ENCODE measurements at regions of chr20 and their contacts with region 1.

Region 1: DNA sequence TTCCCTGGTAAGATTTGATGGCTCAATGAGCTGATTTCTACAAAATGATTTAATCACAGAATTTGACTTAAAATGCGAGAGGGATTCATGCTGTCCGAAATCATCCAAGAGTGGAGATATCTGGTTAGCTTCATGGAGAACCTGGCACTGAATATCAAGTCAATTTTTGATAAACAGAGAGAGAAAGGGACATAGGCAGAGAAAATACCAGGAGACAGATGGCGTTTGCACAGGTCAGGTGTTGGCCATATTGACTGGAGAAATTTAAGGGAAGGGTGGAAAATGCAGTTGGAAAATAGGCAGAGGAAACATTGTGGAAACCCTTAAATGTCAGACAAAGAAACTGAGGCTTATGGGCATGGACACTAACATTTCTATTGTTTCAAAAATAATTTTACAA is 47.0 kb downstream of the BCAS1 start:
- DNase-seq: no peak
- H3K4me3 ChIP-seq: no peak overlapping the region
- H3K27ac ChIP-seq: no peak overlapping the region
- H3K4me1 ChIP-seq: no peaks in the 10 kb centered on the region
- H3K27me3 ChIP-seq: no peaks in the 10 kb centered on the region
- CTCF ChIP-seq: no peak

Region 2: DNA sequence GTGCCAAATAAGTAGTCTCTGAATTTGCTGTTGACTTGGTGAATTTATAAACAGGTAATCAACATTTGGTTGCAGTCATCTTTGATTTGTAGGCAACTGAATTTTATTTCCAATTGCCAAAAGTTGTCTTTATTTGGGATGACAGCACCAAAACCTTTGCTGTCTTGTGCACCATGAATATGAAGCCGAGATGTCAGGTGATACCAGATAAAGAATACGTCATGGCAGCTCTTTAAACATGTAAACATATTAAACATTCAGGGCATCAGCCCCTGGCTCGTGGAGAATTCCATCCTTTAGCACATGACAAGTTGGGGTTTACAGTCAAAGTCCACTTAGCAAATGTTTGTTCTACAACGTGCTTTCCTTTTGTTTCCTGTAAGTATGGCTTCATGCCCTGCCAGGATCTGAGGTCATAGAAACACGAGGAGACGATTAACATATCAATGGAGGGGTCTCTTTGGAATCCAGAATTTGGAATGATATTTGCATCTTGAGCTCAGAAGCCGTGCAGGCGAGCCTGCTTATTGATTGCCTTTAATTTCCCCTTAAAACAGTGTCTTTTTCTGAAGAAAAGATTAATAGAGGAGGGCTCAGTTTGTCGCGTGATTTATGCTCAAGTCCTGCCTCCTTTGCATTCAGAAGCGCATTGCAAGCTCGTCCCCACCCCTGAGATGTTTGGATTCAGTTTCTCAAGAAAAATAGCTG is 259.5 kb before region 1 on chr20:
- CTCF ChIA-PET with region 1: no interaction called
- POLR2A ChIA-PET with region 1: no interaction called
- intact Hi-C with region 1: no loop called
- DNase-seq: peak in 1 of 2 experiments; percentile 29
- H3K4me3 ChIP-seq: no peak overlapping the region
- H3K27ac ChIP-seq: no peak overlapping the region
- H3K4me1 ChIP-seq: peaks cover under 1% of the 10 kb centered on the region; the same call in 1 of the 2 replicates
- H3K27me3 ChIP-seq: no peaks in the 10 kb centered on the region
- CTCF ChIP-seq: no peak

Region 3: GRCh38 chr20:53934421-53935343 is 88.7 kb before region 1 on chr20:
- CTCF ChIA-PET with region 1: no interaction called
- POLR2A ChIA-PET with region 1: no interaction called
- intact Hi-C with region 1: no loop called
- DNase-seq: no peak
- H3K4me3 ChIP-seq: no peak overlapping the region
- H3K27ac ChIP-seq: no peak overlapping the region
- H3K4me1 ChIP-seq: peaks cover 44% of the 10 kb centered on the region
- H3K27me3 ChIP-seq: no peaks in the 10 kb centered on the region
- CTCF ChIP-seq: no peak

Region 4: GRCh38 chr20:53974785-53975555 is 48.4 kb before region 1 on chr20:
- CTCF ChIA-PET with region 1: no interaction called
- POLR2A ChIA-PET with region 1: no interaction called
- intact Hi-C with region 1: loop called (anchors 5 kb)
- DNase-seq: peak in 1 of 2 experiments; percentile 22
- H3K4me3 ChIP-seq: no peak overlapping the region
- H3K27ac ChIP-seq: no peak overlapping the region
- H3K4me1 ChIP-seq: no peaks in the 10 kb centered on the region
- H3K27me3 ChIP-seq: no peaks in the 10 kb centered on the region
- CTCF ChIP-seq: no peak

Region 5: GRCh38 chr20:54062812-54063280 is 39.4 kb after region 1 on chr20:
- CTCF ChIA-PET with region 1: no interaction called
- POLR2A ChIA-PET with region 1: no interaction called
- intact Hi-C with region 1: no loop called
- DNase-seq: peak in 1 of 2 experiments; percentile 60
- H3K4me3 ChIP-seq: no peak overlapping the region
- H3K27ac ChIP-seq: no peak overlapping the region
- H3K4me1 ChIP-seq: peaks cover 13% of the 10 kb centered on the region
- H3K27me3 ChIP-seq: no peaks in the 10 kb centered on the region
- CTCF ChIP-seq: peak; percentile 79

Region 6: GRCh38 chr20:54284934-54285704 is 261.7 kb after region 1 on chr20:
- CTCF ChIA-PET with region 1: no interaction called
- POLR2A ChIA-PET with region 1: no interaction called
- intact Hi-C with region 1: no loop called
- DNase-seq: no peak
- H3K4me3 ChIP-seq: no peak overlapping the region
- H3K27ac ChIP-seq: no peak overlapping the region
- H3K4me1 ChIP-seq: no peaks in the 10 kb centered on the region
- H3K27me3 ChIP-seq: no peaks in the 10 kb centered on the region
- CTCF ChIP-seq: no peak

Measured in PC-9 (cell line).